ENCODE measurements at regions of chr3 and their contacts with region 1.

Region 1: DNA sequence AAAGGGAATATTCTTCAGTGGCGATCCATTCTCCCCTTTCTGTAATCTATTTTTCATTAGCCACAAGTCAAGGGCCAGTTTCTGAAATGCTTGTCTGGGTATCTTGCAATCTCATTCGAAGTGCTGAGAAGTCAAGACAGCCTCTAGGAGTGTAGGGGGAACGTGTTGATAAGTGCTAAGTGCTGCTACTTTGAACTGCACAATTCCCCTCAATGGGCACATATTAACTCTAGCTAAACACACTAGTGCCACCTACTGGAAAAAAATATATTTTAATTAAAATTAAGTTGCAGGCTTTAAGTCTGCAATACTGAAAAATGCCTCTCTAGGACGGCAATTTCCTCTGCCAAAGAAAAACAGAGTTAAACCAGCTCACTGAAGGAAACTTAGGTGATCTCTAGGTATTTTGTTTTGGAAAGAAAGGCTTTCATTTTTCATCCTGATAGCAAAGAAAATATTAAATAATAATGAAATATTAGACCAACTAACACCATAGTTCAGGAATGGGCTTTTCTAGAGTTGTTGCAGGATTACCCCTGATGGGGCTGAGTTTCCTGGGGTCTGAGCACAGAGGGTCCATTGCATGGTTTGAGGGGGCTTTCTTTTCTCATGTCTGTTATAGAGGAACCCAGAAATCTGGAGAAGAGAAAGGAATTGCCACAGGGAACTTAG is 181.9 kb upstream of the KBTBD8 start:
- DNase-seq: peak; percentile 51 to 77 (median 74)
- H3K4me3 ChIP-seq: no peak overlapping the region
- H3K27ac ChIP-seq: no peak overlapping the region
- H3K4me1 ChIP-seq: no peaks in the 10 kb centered on the region
- H3K27me3 ChIP-seq: peaks cover 0 to 3% (median 0%) of the 10 kb centered on the region in 5 experiments

Region 2: GRCh38 chr3:66276705-66277274 is 539.4 kb before region 1 on chr3:
- CTCF ChIA-PET with region 1: interaction called, 42 read pairs
- POLR2A ChIA-PET with region 1: no interaction called
- DNase-seq: peak; percentile 70 to 85 (median 79)
- H3K4me3 ChIP-seq: no peak overlapping the region
- H3K27ac ChIP-seq: no peak overlapping the region
- H3K4me1 ChIP-seq: peaks cover 0 to 3% (median 0%) of the 10 kb centered on the region in 4 experiments
- H3K27me3 ChIP-seq: no peaks in the 10 kb centered on the region

Region 3: DNA sequence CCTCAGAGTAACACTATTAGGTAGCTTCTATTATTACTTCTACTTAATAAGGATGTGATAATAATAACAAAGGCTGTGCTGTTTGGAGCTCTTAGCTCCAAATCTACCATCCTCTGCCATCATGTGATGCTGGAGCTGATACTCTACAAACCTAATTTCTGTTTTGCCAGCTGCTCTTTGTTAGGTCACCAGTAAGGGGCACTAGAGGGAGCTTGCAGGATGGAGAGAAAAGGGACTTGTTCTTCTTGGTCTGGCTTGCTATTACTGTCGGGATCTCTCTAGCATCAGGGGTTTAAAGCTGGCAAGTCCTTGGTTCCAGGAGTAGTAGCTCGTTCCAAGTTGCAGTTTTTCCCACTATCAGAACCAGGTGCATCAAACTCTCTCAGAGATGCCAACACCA is 13.0 kb before region 1 on chr3:
- CTCF ChIA-PET with region 1: interaction called, 22 read pairs
- POLR2A ChIA-PET with region 1: no interaction called
- DNase-seq: peak in 1 of 3 donors; percentile 12
- H3K4me3 ChIP-seq: no peak overlapping the region
- H3K27ac ChIP-seq: no peak overlapping the region
- H3K4me1 ChIP-seq: peaks cover 7 to 21% (median 16%) of the 10 kb centered on the region in 4 experiments
- H3K27me3 ChIP-seq: peaks cover 0 to 3% (median 3%) of the 10 kb centered on the region in 5 experiments